ENCODE measurements at regions of chr3 and their contacts with region 1.

Region 1: GRCh38 chr3:52202384-52203077 is 4.6 kb downstream of the ALAS1 start:
- H3K4me3 Mint-ChIP-seq: no peak overlapping the region
- H3K27ac Mint-ChIP-seq: peak overlapping the region; percentile 58
- H3K4me1 Mint-ChIP-seq: peaks cover 55% of the 10 kb centered on the region
- H3K27me3 Mint-ChIP-seq: no peaks in the 10 kb centered on the region

Region 2: GRCh38 chr3:52090131-52090932 is 112.2 kb before region 1 on chr3:
- intact Hi-C with region 1: no loop called
- H3K4me3 Mint-ChIP-seq: no peak overlapping the region
- H3K27ac Mint-ChIP-seq: no peak overlapping the region
- H3K4me1 Mint-ChIP-seq: peaks cover 72% of the 10 kb centered on the region
- H3K27me3 Mint-ChIP-seq: no peaks in the 10 kb centered on the region

Region 3: GRCh38 chr3:52154117-52155094 is 48.1 kb before region 1 on chr3 and contains the start of gene POC1A:
- intact Hi-C with region 1: loop called (anchors 2 kb)
- H3K4me3 Mint-ChIP-seq: peak within 1 kb of the TSS; percentile 93
- H3K27ac Mint-ChIP-seq: peak within 1 kb of the TSS; percentile 94
- H3K4me1 Mint-ChIP-seq: peaks cover 15% of the 10 kb centered on the region
- H3K27me3 Mint-ChIP-seq: no peaks in the 10 kb centered on the region

Region 4: GRCh38 chr3:52313774-52314188 is 111.2 kb after region 1 on chr3:
- intact Hi-C with region 1: no loop called
- H3K4me3 Mint-ChIP-seq: no peak overlapping the region
- H3K27ac Mint-ChIP-seq: peak overlapping the region; percentile 71
- H3K4me1 Mint-ChIP-seq: peaks cover 81% of the 10 kb centered on the region
- H3K27me3 Mint-ChIP-seq: peaks cover 32% of the 10 kb centered on the region

Measured in dendritic cell treated with granulocyte-macrophage colony-stimulating factor and Interleukin-4, amounts not matched to agents 40 ng/mL and 50 ng/mL, for 4 days (primary cell).